Mammary epithelial cell (primary cell): ENCODE measurements at regions of chr17 and their contacts with region 1.

Region 1: DNA sequence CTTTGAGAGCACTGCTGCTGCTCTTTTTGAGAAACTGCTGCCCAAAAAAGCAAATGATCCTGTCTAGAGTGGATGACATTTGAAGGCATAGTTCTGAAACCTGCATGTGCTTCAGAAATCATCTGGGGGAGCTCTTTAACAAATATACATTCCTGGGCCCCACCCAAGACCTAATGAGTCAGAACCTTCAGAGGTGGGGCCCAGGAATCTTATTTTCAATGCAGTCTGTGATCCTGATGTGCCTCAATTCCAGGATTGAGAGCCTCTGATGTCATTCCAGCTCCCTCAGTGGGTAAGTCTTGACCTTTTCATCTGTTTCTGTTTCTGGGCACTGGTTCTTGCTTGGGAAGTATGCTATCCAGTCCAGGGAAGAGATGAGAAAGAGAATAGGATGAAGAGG is 42.3 kb downstream of the HNF1B start:
- DNase-seq: peak; percentile 86
- H3K4me3 ChIP-seq: no peak overlapping the region
- H3K27ac ChIP-seq: peak overlapping the region; percentile 28
- H3K4me1 ChIP-seq: peaks cover 32% of the 10 kb centered on the region
- H3K27me3 ChIP-seq: no peaks in the 10 kb centered on the region
- CTCF ChIP-seq: peak in 1 of 2 donors; percentile 14

Region 2: DNA sequence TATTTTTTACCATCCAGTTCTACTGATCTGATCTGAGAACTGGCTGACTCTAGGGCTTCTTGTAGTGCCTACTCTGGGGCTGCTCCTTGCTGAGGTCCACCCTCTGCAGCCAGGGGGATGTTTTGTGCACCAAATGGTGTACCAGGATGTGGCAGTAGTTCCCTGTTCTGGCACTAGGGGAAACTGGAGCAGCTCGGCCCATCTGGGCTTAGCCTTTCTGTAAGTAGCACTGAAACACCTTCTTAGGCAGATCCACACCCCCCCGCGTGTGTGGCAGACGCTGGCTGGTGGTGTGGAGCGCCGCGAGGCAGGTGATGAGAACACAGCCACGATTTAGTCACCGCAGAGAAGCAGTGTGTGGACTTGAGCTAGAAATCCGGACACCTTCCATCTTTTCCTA is 195.9 kb before region 1 on chr17:
- CTCF ChIA-PET with region 1: no interaction called
- dilution Hi-C with region 1: no loop called
- in situ Hi-C with region 1: no loop called
- intact Hi-C with region 1: no loop called
- DNase-seq: peak; percentile 26
- H3K4me3 ChIP-seq: no peak overlapping the region
- H3K27ac ChIP-seq: no peak overlapping the region
- H3K4me1 ChIP-seq: peaks cover 3% of the 10 kb centered on the region
- H3K27me3 ChIP-seq: no peaks in the 10 kb centered on the region
- CTCF ChIP-seq: peak; percentile 57 to 60

Region 3: GRCh38 chr17:37637956-37638355 is 64.6 kb before region 1 on chr17:
- CTCF ChIA-PET with region 1: no interaction called
- dilution Hi-C with region 1: loop called (anchors 10 kb)
- in situ Hi-C with region 1: no loop called
- intact Hi-C with region 1: no loop called
- DNase-seq: no peak
- H3K4me3 ChIP-seq: no peak overlapping the region
- H3K27ac ChIP-seq: no peak overlapping the region
- H3K4me1 ChIP-seq: no peaks in the 10 kb centered on the region
- H3K27me3 ChIP-seq: no peaks in the 10 kb centered on the region
- CTCF ChIP-seq: no peak

Region 4: GRCh38 chr17:37659925-37660324 is 42.7 kb before region 1 on chr17:
- CTCF ChIA-PET with region 1: no interaction called
- dilution Hi-C with region 1: no loop called
- in situ Hi-C with region 1: no loop called
- intact Hi-C with region 1: loop called (anchors 5 kb)
- DNase-seq: no peak
- H3K4me3 ChIP-seq: no peak overlapping the region
- H3K27ac ChIP-seq: no peak overlapping the region
- H3K4me1 ChIP-seq: no peaks in the 10 kb centered on the region
- H3K27me3 ChIP-seq: no peaks in the 10 kb centered on the region
- CTCF ChIP-seq: no peak

Region 5: DNA sequence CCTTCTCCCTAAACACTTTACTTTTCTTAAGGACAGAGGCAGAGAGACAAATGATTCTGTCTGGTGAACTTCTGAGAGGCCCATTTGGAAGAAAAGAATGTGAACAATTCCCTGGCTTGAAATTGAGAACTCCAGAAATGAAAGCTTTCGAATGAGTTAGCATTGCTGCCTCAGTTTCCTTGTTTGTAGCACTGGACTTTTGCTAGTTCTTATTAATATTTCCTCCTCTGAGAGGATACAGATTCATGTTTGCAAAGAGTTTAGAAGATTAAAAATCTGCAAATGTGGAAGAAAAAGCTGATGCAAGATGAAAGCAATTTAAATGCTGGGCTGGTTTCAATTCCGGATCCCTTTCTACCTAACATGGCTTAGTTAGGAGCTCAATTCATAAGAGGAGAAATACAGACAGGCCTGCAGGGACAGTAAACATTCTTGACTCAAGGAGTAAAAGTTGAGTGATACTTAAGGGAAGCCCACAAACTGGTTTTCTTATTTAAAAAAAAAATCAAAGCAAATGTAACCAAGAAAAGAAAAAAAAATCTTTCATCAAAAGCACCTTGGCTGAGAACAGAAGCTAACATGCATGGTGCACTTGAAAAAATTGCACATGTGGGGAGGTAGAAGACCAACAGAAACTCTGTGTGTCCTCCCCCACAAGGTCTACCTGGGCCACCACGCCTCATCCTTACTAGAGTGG is 15.2 kb after region 1 on chr17:
- CTCF ChIA-PET with region 1: no interaction called
- dilution Hi-C with region 1: no loop called
- in situ Hi-C with region 1: no loop called
- intact Hi-C with region 1: no loop called
- DNase-seq: no peak
- H3K4me3 ChIP-seq: no peak overlapping the region
- H3K27ac ChIP-seq: no peak overlapping the region
- H3K4me1 ChIP-seq: no peaks in the 10 kb centered on the region
- H3K27me3 ChIP-seq: peaks cover 2% of the 10 kb centered on the region
- CTCF ChIP-seq: no peak

Region 6: DNA sequence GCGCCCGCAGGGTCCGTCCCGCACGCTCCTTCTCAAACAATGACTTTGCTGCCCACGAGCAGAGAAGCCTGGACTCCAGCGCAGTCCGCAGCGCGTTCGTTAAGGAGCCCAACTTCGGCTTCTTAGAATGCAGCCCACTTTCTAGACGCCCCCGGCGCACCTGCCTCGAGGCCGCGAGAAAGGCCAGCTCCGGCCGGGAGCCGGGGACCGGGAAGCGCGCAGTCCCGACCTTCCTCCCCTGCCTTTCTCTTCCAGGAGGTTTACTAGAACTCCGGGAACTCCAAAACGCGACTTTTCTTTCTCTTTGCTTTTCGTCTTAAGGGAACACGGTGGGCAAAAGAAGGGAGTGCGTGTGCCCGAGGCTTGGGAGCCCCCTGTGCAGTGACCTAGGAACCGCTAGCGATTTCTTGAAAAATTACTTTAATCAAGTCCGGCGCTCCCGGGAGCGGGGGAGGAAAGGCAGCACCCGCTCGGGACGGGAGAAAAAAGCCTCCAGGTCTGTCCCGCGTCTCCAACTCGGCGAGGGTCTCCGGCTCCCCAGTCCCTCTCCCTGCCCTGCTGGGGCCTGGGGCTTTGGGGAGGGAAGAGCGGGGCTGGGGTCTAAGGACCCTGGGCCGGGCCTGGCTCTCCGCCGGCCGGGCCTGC is 39.6 kb after region 1 on chr17:
- CTCF ChIA-PET with region 1: no interaction called
- dilution Hi-C with region 1: no loop called
- in situ Hi-C with region 1: no loop called
- intact Hi-C with region 1: no loop called
- DNase-seq: peak; percentile 16
- H3K4me3 ChIP-seq: no peak overlapping the region
- H3K27ac ChIP-seq: no peak overlapping the region
- H3K4me1 ChIP-seq: no peaks in the 10 kb centered on the region
- H3K27me3 ChIP-seq: peaks cover 54% of the 10 kb centered on the region
- CTCF ChIP-seq: no peak

Region 7: GRCh38 chr17:37818689-37819088 is 116.1 kb after region 1 on chr17:
- CTCF ChIA-PET with region 1: interaction called, 4 read pairs
- dilution Hi-C with region 1: no loop called
- in situ Hi-C with region 1: no loop called
- intact Hi-C with region 1: loop called (anchors 1 kb)
- DNase-seq: peak; percentile 93
- H3K4me3 ChIP-seq: no peak overlapping the region
- H3K27ac ChIP-seq: no peak overlapping the region
- H3K4me1 ChIP-seq: peaks cover 21% of the 10 kb centered on the region
- H3K27me3 ChIP-seq: no peaks in the 10 kb centered on the region
- CTCF ChIP-seq: no peak

Region 8: GRCh38 chr17:37829592-37830123 is 127.1 kb after region 1 on chr17:
- CTCF ChIA-PET with region 1: no interaction called
- dilution Hi-C with region 1: no loop called
- in situ Hi-C with region 1: no loop called
- intact Hi-C with region 1: no loop called
- DNase-seq: no peak
- H3K4me3 ChIP-seq: no peak overlapping the region
- H3K27ac ChIP-seq: no peak overlapping the region
- H3K4me1 ChIP-seq: peaks cover 13% of the 10 kb centered on the region
- H3K27me3 ChIP-seq: no peaks in the 10 kb centered on the region
- CTCF ChIP-seq: no peak